ENCODE measurements at regions of chr18 and their contacts with region 1.

Region 1: GRCh38 chr18:25144820-25145219 is 207.1 kb downstream of the ZNF521 start:
- DNase-seq: no peak
- H3K4me3 ChIP-seq: no peak overlapping the region
- H3K27ac ChIP-seq: peak overlapping the region in 1 of 2 donors; percentile 12
- H3K4me1 ChIP-seq: peaks cover 0 to 5% of the 10 kb centered on the region in 2 donors
- H3K27me3 ChIP-seq: no peaks in the 10 kb centered on the region
- CTCF ChIP-seq: no peak
- POLR2A ChIP-seq: no peak

Region 2: GRCh38 chr18:25042641-25043051 is 102.2 kb before region 1 on chr18:
- intact Hi-C with region 1: no loop called
- DNase-seq: no peak
- H3K4me3 ChIP-seq: no peak overlapping the region
- H3K27ac ChIP-seq: no peak overlapping the region
- H3K4me1 ChIP-seq: no peaks in the 10 kb centered on the region
- H3K27me3 ChIP-seq: no peaks in the 10 kb centered on the region
- CTCF ChIP-seq: no peak
- POLR2A ChIP-seq: no peak

Region 3: DNA sequence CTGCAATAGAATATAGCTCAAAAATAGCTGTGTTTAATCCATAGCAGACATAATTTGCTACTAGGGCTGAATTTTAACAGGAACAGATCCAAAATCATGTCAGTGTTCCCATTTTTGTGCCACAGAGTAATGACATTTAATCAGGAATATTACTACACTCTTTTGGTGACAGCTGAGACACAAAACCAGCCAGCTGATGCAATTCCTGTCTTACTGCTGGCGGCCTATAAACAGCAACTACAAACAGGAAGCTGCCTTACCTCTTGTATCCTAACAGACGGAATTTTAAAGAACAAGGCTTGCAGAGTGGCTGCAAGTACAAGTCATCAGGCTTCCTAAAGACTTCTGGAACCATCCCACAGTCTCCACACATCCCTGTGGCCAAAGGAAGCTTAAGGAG is 10.9 kb before region 1 on chr18:
- intact Hi-C with region 1: no loop called
- DNase-seq: no peak
- H3K4me3 ChIP-seq: no peak overlapping the region
- H3K27ac ChIP-seq: no peak overlapping the region
- H3K4me1 ChIP-seq: no peaks in the 10 kb centered on the region
- H3K27me3 ChIP-seq: no peaks in the 10 kb centered on the region
- CTCF ChIP-seq: no peak
- POLR2A ChIP-seq: no peak

Region 4: GRCh38 chr18:25210622-25211021 is 65.8 kb after region 1 on chr18:
- intact Hi-C with region 1: loop called (anchors 2 kb)
- DNase-seq: no peak
- H3K4me3 ChIP-seq: no peak overlapping the region
- H3K27ac ChIP-seq: no peak overlapping the region
- H3K4me1 ChIP-seq: no peaks in the 10 kb centered on the region
- H3K27me3 ChIP-seq: no peaks in the 10 kb centered on the region
- CTCF ChIP-seq: no peak
- POLR2A ChIP-seq: no peak

Measured in breast epithelium (tissue), 4 donors.